Psoas muscle (tissue), 8 donors: ENCODE measurements at regions of chr18 and their contacts with region 1.

Region 1: DNA sequence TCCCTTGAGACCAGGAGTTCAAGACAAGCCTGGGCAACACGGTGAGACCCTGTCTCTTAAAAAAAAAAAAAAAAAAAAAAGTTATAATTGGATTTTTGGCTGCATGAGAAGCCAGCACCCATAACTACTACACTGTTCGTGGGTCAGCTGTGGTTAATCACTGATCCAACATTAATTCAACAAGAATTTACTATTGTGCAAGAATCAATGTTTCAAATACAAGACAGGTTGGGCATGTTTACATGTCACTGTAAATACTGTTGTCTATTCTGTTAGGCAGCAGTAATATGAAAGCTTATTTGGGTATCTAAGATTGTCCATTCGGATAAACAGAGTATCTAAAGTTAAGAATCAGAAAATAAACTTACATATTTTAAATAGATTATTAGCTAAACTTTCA is 62.3 kb downstream of the ESCO1 start:
- DNase-seq: no peak
- ATAC-seq: no peak
- H3K4me3 ChIP-seq: no peak overlapping the region
- H3K27ac ChIP-seq: no peak overlapping the region
- H3K4me1 ChIP-seq: no peaks in the 10 kb centered on the region
- H3K27me3 ChIP-seq: no peaks in the 10 kb centered on the region
- CTCF ChIP-seq: no peak

Region 2: DNA sequence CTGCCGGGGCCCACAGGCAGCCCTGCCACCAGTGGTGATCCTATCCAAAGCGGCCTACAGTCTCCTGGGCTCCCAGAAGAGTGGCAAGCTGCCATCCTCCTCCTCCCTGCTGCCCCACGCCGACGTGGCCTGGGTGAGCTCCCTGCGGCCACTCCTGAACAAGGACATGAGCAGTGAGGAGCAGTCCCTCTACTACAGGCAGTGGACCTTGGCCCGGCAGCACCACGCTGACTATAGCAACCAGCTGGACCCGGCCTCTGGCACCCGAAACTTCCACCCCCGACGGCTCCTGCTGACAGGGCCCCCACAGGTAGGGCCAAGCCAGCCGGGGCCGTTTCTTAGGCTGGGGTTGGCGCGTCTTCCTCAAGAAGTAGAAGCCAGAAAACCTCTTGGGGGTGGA is 38.2 kb before region 1 on chr18:
- intact Hi-C with region 1: loop called in 1 of 2 experiments (anchors 5 kb)
- DNase-seq: no peak
- ATAC-seq: peak in 2 of 4 donors; percentile 17 to 30
- H3K4me3 ChIP-seq: no peak overlapping the region
- H3K27ac ChIP-seq: no peak overlapping the region
- H3K4me1 ChIP-seq: peaks cover 9% of the 10 kb centered on the region
- H3K27me3 ChIP-seq: no peaks in the 10 kb centered on the region
- CTCF ChIP-seq: no peak

Region 3: GRCh38 chr18:21593540-21594257 is 55.5 kb after region 1 on chr18:
- intact Hi-C with region 1: loop called in 1 of 2 experiments (anchors 5 kb)
- DNase-seq: no peak
- ATAC-seq: no peak
- H3K4me3 ChIP-seq: no peak overlapping the region
- H3K27ac ChIP-seq: no peak overlapping the region
- H3K4me1 ChIP-seq: peaks cover under 1% of the 10 kb centered on the region
- H3K27me3 ChIP-seq: no peaks in the 10 kb centered on the region
- CTCF ChIP-seq: no peak

Region 4: DNA sequence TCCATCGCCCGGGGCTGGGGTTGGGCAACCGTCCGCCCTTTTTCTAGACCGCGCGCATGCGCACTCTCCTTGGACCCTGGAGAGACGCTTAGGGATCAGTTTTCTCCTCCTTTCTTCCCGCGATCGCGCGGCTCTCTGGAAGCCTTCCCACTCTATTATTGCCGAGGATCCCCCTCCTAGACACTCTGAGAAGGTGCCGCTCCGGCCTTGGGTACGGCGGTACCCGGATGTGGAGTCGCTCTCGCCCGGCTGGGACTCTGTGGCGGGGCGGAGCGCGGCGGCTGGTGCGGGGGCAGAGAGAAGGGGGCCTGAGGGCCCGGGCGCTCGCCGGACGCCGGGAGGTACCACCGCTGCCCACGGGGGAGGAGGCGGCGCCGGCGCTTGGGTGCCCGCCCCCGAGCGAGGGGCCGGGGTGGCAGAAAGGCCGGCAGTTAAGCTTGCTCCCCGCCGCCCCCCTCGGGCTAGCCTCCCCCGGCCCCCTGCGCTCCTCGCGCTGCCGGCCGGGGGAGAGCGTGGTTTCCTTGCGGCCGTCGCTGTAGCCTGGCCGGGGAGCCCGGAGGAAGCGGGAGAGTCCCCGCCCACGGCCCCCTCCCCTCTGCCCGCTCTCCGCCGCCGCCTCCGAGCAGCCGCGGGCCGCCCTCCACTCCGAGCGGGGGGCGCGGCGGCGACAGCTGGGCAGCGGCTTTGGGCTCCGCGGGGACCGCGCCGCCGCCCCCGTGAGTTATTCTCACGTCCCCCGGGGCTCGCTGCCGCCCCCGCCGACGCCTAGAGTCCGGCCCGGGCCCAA is 202.7 kb after region 1 on chr18 and contains the start of gene MIB1:
- intact Hi-C with region 1: no loop called
- DNase-seq: peak; percentile 99
- ATAC-seq: peak; percentile 85 to 91 (median 88)
- H3K4me3 ChIP-seq: peak within 1 kb of the TSS; percentile 99
- H3K27ac ChIP-seq: peak within 1 kb of the TSS; percentile 99
- H3K4me1 ChIP-seq: peaks cover 5% of the 10 kb centered on the region
- H3K27me3 ChIP-seq: no peaks in the 10 kb centered on the region
- CTCF ChIP-seq: peak; percentile 3
- total RNA-seq, gene MIB1: 16.1 to 21.3 (median 19.9) TPM